CD14-positive monocyte (primary cell): ENCODE measurements at regions of chrX and their contacts with region 1.

Region 1: GRCh38 chrX:129606918-129607317 is 47.8 kb downstream of the APLN start:
- DNase-seq: peak; percentile 35 to 61 (median 51)
- H3K4me3 ChIP-seq: no peak overlapping the region
- H3K4me3 Mint-ChIP-seq: no peak overlapping the region
- H3K27ac ChIP-seq: no peak overlapping the region
- H3K27ac Mint-ChIP-seq: no peak overlapping the region
- H3K4me1 ChIP-seq: peaks cover 12 to 19% of the 10 kb centered on the region in 2 donors
- H3K4me1 Mint-ChIP-seq: peaks cover 16% of the 10 kb centered on the region
- H3K27me3 ChIP-seq: no peaks in the 10 kb centered on the region
- H3K27me3 Mint-ChIP-seq: peaks cover 0 to 8% (median 0%) of the 10 kb centered on the region in 3 donors
- CTCF ChIP-seq: peak; percentile 60

Region 2: GRCh38 chrX:129737916-129738315 is 131.0 kb after region 1 on chrX:
- intact Hi-C with region 1: loop called in 1 of 2 experiments (anchors 5 kb)
- DNase-seq: peak; percentile 75 to 85 (median 75)
- H3K4me3 ChIP-seq: no peak overlapping the region
- H3K4me3 Mint-ChIP-seq: no peak overlapping the region
- H3K27ac ChIP-seq: peak overlapping the region; percentile 67 to 74
- H3K27ac Mint-ChIP-seq: peak overlapping the region; percentile 76 to 93 (median 86)
- H3K4me1 ChIP-seq: peaks cover 51 to 54% of the 10 kb centered on the region in 2 donors
- H3K4me1 Mint-ChIP-seq: peaks cover 52% of the 10 kb centered on the region
- H3K27me3 ChIP-seq: no peaks in the 10 kb centered on the region
- H3K27me3 Mint-ChIP-seq: peaks cover 0 to 3% (median 0%) of the 10 kb centered on the region in 3 donors
- CTCF ChIP-seq: no peak

Region 3: DNA sequence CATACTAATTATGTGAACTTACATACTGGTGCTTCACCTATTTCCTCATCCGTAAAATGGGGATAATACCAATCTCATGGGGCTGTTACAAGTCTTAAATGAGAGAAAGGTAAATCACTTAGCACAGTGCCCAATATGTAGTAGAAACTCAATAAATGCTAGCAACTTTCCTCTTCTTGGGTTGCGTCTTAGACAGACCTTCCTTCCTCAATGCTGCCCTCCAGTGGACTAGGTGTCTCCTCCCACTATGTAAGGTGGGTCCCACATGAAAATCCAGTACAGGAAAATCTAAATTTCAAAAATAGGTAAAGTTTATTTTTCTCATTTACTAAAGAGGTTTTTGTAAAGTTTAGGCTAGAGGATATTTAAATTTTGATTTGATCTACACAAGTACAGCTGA is 216.2 kb after region 1 on chrX:
- intact Hi-C with region 1: loop called (anchors 10 kb)
- DNase-seq: peak; percentile 38 to 58 (median 57)
- H3K4me3 ChIP-seq: peak overlapping the region in 1 of 3 experiments; percentile 42
- H3K4me3 Mint-ChIP-seq: no peak overlapping the region
- H3K27ac ChIP-seq: peak overlapping the region in 1 of 2 donors; percentile 73
- H3K27ac Mint-ChIP-seq: peak overlapping the region in 6 of 7 donors; percentile 75 to 97 (median 87)
- H3K4me1 ChIP-seq: peaks cover 10 to 12% of the 10 kb centered on the region in 2 donors
- H3K4me1 Mint-ChIP-seq: peaks cover 11% of the 10 kb centered on the region
- H3K27me3 ChIP-seq: no peaks in the 10 kb centered on the region
- H3K27me3 Mint-ChIP-seq: no peaks in the 10 kb centered on the region
- CTCF ChIP-seq: peak; percentile 76

Region 4: DNA sequence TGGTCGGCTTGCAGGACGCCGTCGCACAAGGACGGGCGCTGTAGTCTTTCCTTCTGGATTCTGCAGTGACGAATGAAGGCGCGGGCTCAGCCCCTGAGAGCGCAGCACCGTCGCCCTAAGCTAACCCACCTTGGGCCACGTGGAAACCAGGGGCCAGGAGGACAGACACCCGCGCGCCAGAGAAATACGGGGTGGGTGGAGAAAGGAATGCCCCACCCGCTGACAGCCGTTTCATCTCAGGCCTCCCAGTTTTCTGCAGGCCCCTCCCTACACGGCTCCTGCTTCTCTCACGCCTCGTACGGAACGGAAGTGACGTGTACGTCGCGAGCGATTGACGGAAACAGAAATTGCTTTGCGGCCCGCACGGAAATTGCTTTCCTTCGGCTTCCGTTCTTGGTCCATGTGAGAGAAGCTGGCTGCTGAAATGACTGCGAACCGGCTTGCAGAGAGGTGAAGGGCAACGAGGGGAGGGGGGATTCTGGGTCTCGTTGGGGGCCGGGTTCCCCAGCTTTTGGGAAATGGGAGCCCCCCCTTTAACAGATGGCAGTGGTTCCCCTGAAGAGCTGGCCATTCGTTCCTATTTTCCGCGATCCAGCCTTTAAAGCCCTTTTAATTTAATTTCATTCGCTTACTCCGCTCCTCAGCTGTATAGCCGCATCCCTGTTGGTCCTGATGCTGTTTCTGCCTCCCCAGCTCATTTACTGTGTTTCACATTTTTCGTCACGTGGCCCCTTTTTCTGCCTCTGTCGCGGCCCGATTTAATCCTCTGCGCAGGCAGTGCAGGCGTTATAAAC is 299.1 kb after region 1 on chrX and contains the start of gene UTP14A:
- intact Hi-C with region 1: loop called in 1 of 2 experiments (anchors 10 kb)
- DNase-seq: peak; percentile 83 to 88 (median 85)
- H3K4me3 ChIP-seq: peak within 1 kb of the TSS; percentile 75 to 85 (median 79)
- H3K4me3 Mint-ChIP-seq: peak within 1 kb of the TSS; percentile 87 to 92
- H3K27ac ChIP-seq: peak within 1 kb of the TSS; percentile 60 to 81
- H3K27ac Mint-ChIP-seq: peak within 1 kb of the TSS; percentile 85 to 95 (median 90)
- H3K4me1 ChIP-seq: peaks cover 5 to 7% of the 10 kb centered on the region in 2 donors
- H3K4me1 Mint-ChIP-seq: peaks cover 2% of the 10 kb centered on the region
- H3K27me3 ChIP-seq: no peaks in the 10 kb centered on the region
- H3K27me3 Mint-ChIP-seq: peaks cover 0 to 3% (median 2%) of the 10 kb centered on the region in 3 donors
- CTCF ChIP-seq: no peak
- polyA plus RNA-seq, gene UTP14A: 2.9 to 5.5 (median 3.8) TPM

Region 5: GRCh38 chrX:130024127-130024526 is 417.2 kb after region 1 on chrX:
- intact Hi-C with region 1: loop called in 1 of 2 experiments (anchors 10 kb)
- DNase-seq: peak; percentile 80 to 86 (median 84)
- H3K4me3 ChIP-seq: peak overlapping the region in 1 of 3 experiments; percentile 17
- H3K4me3 Mint-ChIP-seq: peak overlapping the region; percentile 55 to 70
- H3K27ac ChIP-seq: peak overlapping the region; percentile 40 to 72
- H3K27ac Mint-ChIP-seq: peak overlapping the region; percentile 82 to 93 (median 90)
- H3K4me1 ChIP-seq: peaks cover 10% of the 10 kb centered on the region in 2 donors
- H3K4me1 Mint-ChIP-seq: peaks cover 14% of the 10 kb centered on the region
- H3K27me3 ChIP-seq: no peaks in the 10 kb centered on the region
- H3K27me3 Mint-ChIP-seq: peaks cover 0 to 6% (median 0%) of the 10 kb centered on the region in 3 donors
- CTCF ChIP-seq: no peak

Region 6: DNA sequence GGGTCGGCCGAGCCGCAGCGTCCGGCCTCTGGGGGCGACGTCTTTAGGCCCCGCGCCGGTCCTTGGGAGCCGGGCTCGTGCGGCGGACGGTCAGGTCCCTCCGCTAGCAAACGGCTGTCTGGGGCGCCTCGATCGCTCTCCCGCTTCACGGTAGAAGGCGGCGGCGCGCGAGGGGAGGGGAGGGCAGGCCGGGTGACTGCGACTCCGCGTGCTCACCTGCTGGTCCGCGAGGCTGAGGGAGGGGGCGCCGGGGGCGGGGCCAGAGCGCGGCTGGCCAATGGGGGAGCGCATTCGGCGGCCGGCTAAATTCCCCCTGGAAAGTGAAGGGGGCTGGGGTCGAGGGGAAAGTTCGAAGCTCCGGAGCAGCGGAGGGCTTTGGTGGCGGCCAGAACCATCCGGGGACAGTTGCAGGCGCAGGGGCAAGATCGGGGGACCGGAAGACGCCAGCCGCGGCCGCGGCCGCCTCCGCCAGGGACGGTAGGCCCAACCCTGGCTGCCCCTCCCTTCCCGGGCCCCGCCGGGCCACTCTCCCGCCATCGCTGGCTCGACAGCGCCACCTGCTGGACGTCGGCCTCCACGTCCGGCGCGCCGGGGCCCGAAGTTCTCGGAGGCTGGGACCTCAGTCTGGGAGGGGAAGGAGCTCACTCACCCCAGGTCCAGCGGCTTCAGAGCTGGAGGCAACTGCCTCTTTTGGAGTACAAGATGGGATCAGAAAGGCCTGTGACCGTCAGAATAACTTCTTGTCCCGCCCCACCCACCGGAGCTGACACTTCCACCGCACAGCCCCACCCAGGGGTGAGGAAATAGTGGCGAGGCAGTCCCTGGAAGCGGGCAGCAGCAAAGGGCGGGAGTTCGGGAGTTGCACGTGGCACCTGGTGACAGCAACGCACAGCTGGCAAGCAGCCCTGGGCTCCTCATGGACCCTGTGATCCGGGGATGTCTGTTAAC is 453.5 kb after region 1 on chrX:
- intact Hi-C with region 1: loop called in 1 of 2 experiments (anchors 10 kb)
- DNase-seq: peak; percentile 59 to 68 (median 68)
- H3K4me3 ChIP-seq: peak overlapping the region; percentile 42 to 69 (median 44)
- H3K4me3 Mint-ChIP-seq: peak overlapping the region; percentile 76 to 81
- H3K27ac ChIP-seq: peak overlapping the region in 1 of 2 donors; percentile 38
- H3K27ac Mint-ChIP-seq: peak overlapping the region in 6 of 7 donors; percentile 33 to 93 (median 88)
- H3K4me1 ChIP-seq: peaks cover 9 to 12% of the 10 kb centered on the region in 2 donors
- H3K4me1 Mint-ChIP-seq: peaks cover 12% of the 10 kb centered on the region
- H3K27me3 ChIP-seq: no peaks in the 10 kb centered on the region
- H3K27me3 Mint-ChIP-seq: peaks cover 2 to 6% (median 3%) of the 10 kb centered on the region in 3 donors
- CTCF ChIP-seq: peak; percentile 75